IMR-90 (cell line): ENCODE measurements at regions of chr14 and their contacts with region 1.

Region 1: DNA sequence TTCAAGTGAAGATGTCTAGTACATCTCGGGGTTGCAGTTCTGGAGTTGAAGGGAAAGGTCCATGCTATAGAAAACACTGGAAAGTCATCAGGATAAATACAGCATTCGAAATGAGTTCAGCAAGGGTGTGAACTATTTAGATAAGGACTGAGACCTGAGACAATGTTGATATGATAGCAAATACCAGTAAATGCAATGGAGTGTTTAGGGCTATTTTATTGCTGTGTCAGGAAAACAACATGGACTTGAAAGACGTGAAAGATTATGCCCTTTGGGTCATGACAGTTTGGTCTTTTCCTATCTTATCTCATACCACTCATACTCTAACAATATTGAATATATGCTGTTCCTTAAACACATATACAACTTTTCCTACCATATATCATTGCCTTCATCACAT is 1776.2 kb upstream of the SEL1L start:
- DNase-seq: no peak
- ATAC-seq: no peak
- H3K4me3 ChIP-seq: no peak overlapping the region
- H3K27ac ChIP-seq: no peak overlapping the region
- H3K4me1 ChIP-seq: no peaks in the 10 kb centered on the region
- H3K27me3 ChIP-seq: no peaks in the 10 kb centered on the region
- CTCF ChIP-seq: no peak
- POLR2A ChIP-seq: no peak
- RAD21 ChIP-seq: no peak

Region 2: DNA sequence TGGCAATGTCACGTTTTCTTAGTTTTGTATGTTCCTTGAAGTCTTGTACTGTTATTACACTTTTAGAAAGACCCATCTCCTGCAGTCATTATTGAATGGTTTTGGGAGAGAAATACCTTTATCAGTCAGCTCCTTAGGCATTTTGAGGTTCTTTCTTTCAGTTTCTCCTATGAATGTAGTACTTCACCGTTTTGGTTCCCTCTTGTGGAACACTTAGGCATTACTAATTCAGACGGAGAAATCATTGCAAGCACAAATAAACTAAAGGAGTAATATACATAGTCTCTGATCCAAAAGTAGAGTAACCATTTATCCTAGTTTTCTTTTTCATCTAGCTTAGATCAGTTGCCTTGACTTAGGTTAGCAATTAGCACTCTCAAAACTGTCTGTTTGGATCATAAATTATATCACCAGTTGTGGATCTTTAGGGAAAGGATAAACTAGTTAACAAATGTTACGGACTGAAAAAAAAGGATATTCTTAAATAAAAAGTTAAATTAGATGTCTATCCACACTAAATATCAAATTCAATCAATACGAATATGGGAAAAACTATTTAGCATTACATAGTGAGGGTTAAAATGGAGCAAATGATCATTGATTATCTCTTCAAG is 237.8 kb before region 1 on chr14:
- CTCF ChIA-PET with region 1: no interaction called
- POLR2A ChIA-PET with region 1: no interaction called
- dilution Hi-C with region 1: no loop called
- in situ Hi-C with region 1: no loop called
- intact Hi-C with region 1: no loop called
- DNase-seq: peak; percentile 19
- ATAC-seq: no peak
- H3K4me3 ChIP-seq: no peak overlapping the region
- H3K27ac ChIP-seq: no peak overlapping the region
- H3K4me1 ChIP-seq: no peaks in the 10 kb centered on the region
- H3K27me3 ChIP-seq: no peaks in the 10 kb centered on the region
- CTCF ChIP-seq: peak; percentile 30; the same call in 1 of the 2 replicates
- POLR2A ChIP-seq: no peak
- RAD21 ChIP-seq: peak; percentile 7; the same call in 1 of the 2 replicates

Region 3: GRCh38 chr14:84646786-84647500 is 1337.1 kb after region 1 on chr14:
- CTCF ChIA-PET with region 1: no interaction called
- POLR2A ChIA-PET with region 1: no interaction called
- dilution Hi-C with region 1: no loop called
- in situ Hi-C with region 1: no loop called
- intact Hi-C with region 1: loop called (anchors 5 kb)
- DNase-seq: peak; percentile 11
- ATAC-seq: peak; percentile 46; the same call in 1 of the 2 replicates
- H3K4me3 ChIP-seq: no peak overlapping the region
- H3K27ac ChIP-seq: no peak overlapping the region
- H3K4me1 ChIP-seq: no peaks in the 10 kb centered on the region
- H3K27me3 ChIP-seq: no peaks in the 10 kb centered on the region
- CTCF ChIP-seq: no peak
- POLR2A ChIP-seq: no peak
- RAD21 ChIP-seq: no peak